ENCODE measurements at regions of chr2 and their contacts with region 1.

Region 1: GRCh38 chr2:38947240-38948239 is 57.9 kb downstream of the ARHGEF33 start:
- DNase-seq: peak; percentile 83
- H3K4me3 ChIP-seq: no peak overlapping the region
- H3K27ac ChIP-seq: no peak overlapping the region
- H3K4me1 ChIP-seq: no peaks in the 10 kb centered on the region
- H3K27me3 ChIP-seq: no peaks in the 10 kb centered on the region
- CTCF ChIP-seq: peak; percentile 82

Region 2: GRCh38 chr2:38797276-38797675 is 150.3 kb before region 1 on chr2:
- CTCF ChIA-PET with region 1: no interaction called
- POLR2A ChIA-PET with region 1: no interaction called
- intact Hi-C with region 1: no loop called
- DNase-seq: no peak
- H3K4me3 ChIP-seq: no peak overlapping the region
- H3K27ac ChIP-seq: no peak overlapping the region
- H3K4me1 ChIP-seq: no peaks in the 10 kb centered on the region
- H3K27me3 ChIP-seq: no peaks in the 10 kb centered on the region
- CTCF ChIP-seq: no peak

Region 3: GRCh38 chr2:39033980-39034379 is 86.4 kb after region 1 on chr2:
- CTCF ChIA-PET with region 1: interaction called, 14 read pairs
- POLR2A ChIA-PET with region 1: interaction called, 4 read pairs
- intact Hi-C with region 1: loop called (anchors 5 kb)
- DNase-seq: no peak
- H3K4me3 ChIP-seq: no peak overlapping the region
- H3K27ac ChIP-seq: no peak overlapping the region
- H3K4me1 ChIP-seq: no peaks in the 10 kb centered on the region
- H3K27me3 ChIP-seq: no peaks in the 10 kb centered on the region
- CTCF ChIP-seq: no peak

Region 4: GRCh38 chr2:39039072-39039471 is 91.5 kb after region 1 on chr2:
- CTCF ChIA-PET with region 1: interaction called, 14 read pairs
- POLR2A ChIA-PET with region 1: interaction called, 4 read pairs
- intact Hi-C with region 1: loop called (anchors 5 kb)
- DNase-seq: no peak
- H3K4me3 ChIP-seq: no peak overlapping the region
- H3K27ac ChIP-seq: no peak overlapping the region
- H3K4me1 ChIP-seq: no peaks in the 10 kb centered on the region
- H3K27me3 ChIP-seq: no peaks in the 10 kb centered on the region
- CTCF ChIP-seq: no peak

Region 5: DNA sequence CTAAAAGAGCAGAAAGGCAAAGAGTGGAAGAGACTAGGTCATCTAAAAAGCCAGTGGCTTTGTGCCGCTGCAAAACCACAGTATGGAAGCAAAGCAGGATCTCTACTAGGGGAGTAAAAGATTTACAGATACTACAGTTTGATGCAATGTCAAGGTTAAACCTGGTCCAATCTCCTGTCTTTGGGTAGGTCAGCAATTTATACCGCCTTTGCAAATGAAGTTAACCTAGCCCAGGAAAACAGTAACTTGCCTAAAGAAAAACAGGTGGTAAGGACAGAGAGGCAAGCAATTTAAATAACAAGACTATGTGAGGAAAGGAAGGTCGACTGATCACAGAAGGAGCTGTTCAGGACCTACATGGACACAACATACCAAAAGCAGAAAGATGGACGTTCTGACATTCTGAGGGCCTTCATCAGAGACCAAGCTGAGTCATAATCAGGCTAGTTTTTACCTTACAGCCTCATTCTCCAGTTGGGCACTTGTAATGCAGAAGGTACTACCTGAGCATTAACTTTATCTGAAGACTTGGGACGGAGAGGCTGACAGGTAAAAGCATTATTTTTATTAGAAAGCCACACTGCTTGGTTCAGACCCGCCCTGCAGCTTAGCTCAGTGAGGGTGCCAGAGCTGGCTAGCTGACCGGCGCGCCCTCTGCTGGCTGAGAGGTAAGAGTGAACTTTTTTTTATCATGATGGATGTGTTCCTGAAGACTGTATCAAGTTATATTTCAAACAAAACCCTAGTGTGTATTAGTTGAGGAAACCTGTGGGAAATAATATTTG is 280.3 kb after region 1 on chr2:
- CTCF ChIA-PET with region 1: interaction called, 23 read pairs
- POLR2A ChIA-PET with region 1: no interaction called
- intact Hi-C with region 1: loop called (anchors 1 kb)
- DNase-seq: peak; percentile 77
- H3K4me3 ChIP-seq: peak overlapping the region; percentile 27
- H3K27ac ChIP-seq: no peak overlapping the region
- H3K4me1 ChIP-seq: no peaks in the 10 kb centered on the region
- H3K27me3 ChIP-seq: no peaks in the 10 kb centered on the region
- CTCF ChIP-seq: peak; percentile 92

Region 6: DNA sequence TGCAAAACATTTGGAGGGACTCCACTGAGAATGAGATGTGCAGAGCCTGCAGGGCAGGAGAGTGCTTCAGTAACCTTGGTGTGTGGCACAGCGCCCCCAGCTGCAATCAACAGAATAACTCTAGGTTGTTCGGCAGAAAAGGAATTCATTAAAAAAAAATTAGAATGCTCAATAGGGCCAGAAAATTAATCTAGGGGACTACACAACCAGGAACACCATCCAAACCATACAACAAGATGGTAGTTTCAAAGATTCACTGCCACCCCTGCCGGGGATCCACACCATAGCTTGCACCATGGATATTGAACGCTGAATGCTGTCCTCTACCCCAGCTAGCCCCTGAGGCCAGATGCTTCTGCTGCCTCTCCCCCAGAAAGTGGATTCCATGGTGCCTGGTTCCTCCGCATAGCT is 781.4 kb after region 1 on chr2:
- CTCF ChIA-PET with region 1: no interaction called
- POLR2A ChIA-PET with region 1: no interaction called
- intact Hi-C with region 1: loop called (anchors 5 kb)
- DNase-seq: peak; percentile 65
- H3K4me3 ChIP-seq: no peak overlapping the region
- H3K27ac ChIP-seq: no peak overlapping the region
- H3K4me1 ChIP-seq: peaks cover 27% of the 10 kb centered on the region
- H3K27me3 ChIP-seq: no peaks in the 10 kb centered on the region
- CTCF ChIP-seq: peak; percentile 95